ENCODE measurements at regions of chr17 and their contacts with region 1.

Region 1: GRCh38 chr17:70767102-70767701 is 597.9 kb downstream of the KCNJ2 start:
- DNase-seq: peak; percentile 29 to 43
- ATAC-seq: peak in 1 of 2 experiments; percentile 39; a peak in 1 of 6 replicates
- H3K4me3 ChIP-seq: no peak overlapping the region
- H3K27ac ChIP-seq: no peak overlapping the region
- H3K4me1 ChIP-seq: no peaks in the 10 kb centered on the region
- CTCF ChIP-seq: peak; percentile 89
- EP300 ChIP-seq: no peak
- POLR2A ChIP-seq: no peak
- RAD21 ChIP-seq: peak; percentile 86 to 93

Region 2: DNA sequence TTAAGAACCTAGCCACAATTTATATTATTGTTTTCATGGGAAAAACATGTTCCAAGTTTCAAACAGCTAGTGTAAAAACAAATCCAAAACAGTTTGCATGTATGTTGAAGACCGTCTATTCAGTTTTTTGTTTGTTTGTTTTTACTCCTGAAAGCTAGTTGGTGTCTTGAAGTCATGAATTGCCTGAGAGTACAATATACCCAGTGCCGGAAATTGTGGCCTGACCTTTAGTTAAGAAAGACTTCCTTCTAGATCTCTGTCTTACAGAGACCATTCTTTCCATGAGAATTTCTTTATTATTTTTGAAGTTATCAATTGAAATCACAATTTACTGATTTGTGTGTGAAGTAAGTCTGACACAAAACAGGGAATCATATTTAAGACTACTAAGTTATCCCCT is 123.1 kb before region 1 on chr17:
- CTCF ChIA-PET with region 1: no interaction called
- POLR2A ChIA-PET with region 1: no interaction called
- DNase-seq: no peak
- ATAC-seq: no peak
- H3K4me3 ChIP-seq: no peak overlapping the region
- H3K27ac ChIP-seq: no peak overlapping the region
- H3K4me1 ChIP-seq: no peaks in the 10 kb centered on the region
- CTCF ChIP-seq: no peak
- EP300 ChIP-seq: no peak
- POLR2A ChIP-seq: no peak
- RAD21 ChIP-seq: no peak

Region 3: DNA sequence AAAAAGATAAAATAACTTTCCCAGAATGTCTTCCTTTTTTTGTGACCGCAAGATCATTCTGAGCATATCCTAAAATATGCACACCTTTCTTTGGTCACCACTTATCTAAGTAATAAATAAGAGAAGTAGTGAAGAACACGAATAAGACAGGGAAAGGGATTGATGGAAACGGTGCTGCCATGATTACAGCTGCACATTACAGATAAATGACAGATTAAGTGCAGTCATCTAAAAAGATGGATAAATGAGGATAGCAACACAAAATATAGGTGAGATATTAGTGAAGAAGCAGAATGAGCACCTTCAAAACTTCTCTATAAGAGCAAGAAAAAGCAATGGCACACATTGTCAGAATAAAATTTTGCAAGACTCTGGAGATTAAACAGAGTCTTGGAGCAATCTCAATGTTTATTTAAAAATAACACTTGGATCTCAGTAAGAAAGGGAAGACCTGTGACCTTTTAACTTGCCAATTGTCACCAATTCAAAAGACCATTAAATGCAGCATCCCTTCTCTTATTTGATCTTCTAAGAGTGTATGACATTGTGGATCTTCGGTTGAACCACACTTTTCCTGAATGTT is 30.7 kb before region 1 on chr17:
- CTCF ChIA-PET with region 1: no interaction called
- POLR2A ChIA-PET with region 1: no interaction called
- DNase-seq: no peak
- ATAC-seq: no peak
- H3K4me3 ChIP-seq: no peak overlapping the region
- H3K27ac ChIP-seq: no peak overlapping the region
- H3K4me1 ChIP-seq: no peaks in the 10 kb centered on the region
- CTCF ChIP-seq: no peak
- EP300 ChIP-seq: no peak
- POLR2A ChIP-seq: no peak
- RAD21 ChIP-seq: no peak

Region 4: DNA sequence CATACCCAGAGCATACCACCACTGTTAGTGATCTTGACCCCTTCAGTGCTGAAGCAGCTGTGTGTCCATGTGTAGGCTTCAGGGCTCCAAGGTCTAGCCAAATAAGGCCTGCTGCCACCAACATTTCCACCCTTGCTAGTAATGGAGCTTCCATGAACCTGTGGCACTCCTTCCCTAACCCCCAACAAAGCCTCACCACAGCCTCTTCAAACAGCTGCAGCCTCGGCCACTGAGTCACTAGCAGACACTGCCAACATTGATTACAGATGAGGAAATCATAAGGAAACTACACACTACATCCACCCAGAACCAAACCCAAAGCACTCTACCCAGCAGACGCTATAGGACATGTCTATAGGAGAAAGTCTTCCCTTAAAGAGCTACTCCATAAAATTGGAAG is 12.8 kb after region 1 on chr17:
- CTCF ChIA-PET with region 1: interaction called, 43 read pairs
- POLR2A ChIA-PET with region 1: no interaction called
- DNase-seq: no peak
- ATAC-seq: no peak
- H3K4me3 ChIP-seq: no peak overlapping the region
- H3K27ac ChIP-seq: no peak overlapping the region
- H3K4me1 ChIP-seq: no peaks in the 10 kb centered on the region
- CTCF ChIP-seq: no peak
- EP300 ChIP-seq: no peak
- POLR2A ChIP-seq: no peak
- RAD21 ChIP-seq: no peak

Region 5: GRCh38 chr17:71460943-71461342 is 693.7 kb after region 1 on chr17:
- CTCF ChIA-PET with region 1: interaction called, 10 read pairs
- POLR2A ChIA-PET with region 1: no interaction called
- DNase-seq: peak in 1 of 2 experiments; percentile 12
- ATAC-seq: no peak
- H3K4me3 ChIP-seq: no peak overlapping the region
- H3K27ac ChIP-seq: no peak overlapping the region
- H3K4me1 ChIP-seq: no peaks in the 10 kb centered on the region
- CTCF ChIP-seq: peak; percentile 43
- EP300 ChIP-seq: no peak
- POLR2A ChIP-seq: no peak
- RAD21 ChIP-seq: peak; percentile 43 to 55; a peak in 4 of 5 replicates

Region 6: GRCh38 chr17:71636644-71637043 is 869.4 kb after region 1 on chr17:
- CTCF ChIA-PET with region 1: no interaction called
- POLR2A ChIA-PET with region 1: no interaction called
- DNase-seq: no peak
- ATAC-seq: no peak
- H3K4me3 ChIP-seq: no peak overlapping the region
- H3K27ac ChIP-seq: no peak overlapping the region
- H3K4me1 ChIP-seq: peaks cover 18% of the 10 kb centered on the region
- CTCF ChIP-seq: no peak
- EP300 ChIP-seq: no peak
- POLR2A ChIP-seq: no peak
- RAD21 ChIP-seq: no peak

Region 7: DNA sequence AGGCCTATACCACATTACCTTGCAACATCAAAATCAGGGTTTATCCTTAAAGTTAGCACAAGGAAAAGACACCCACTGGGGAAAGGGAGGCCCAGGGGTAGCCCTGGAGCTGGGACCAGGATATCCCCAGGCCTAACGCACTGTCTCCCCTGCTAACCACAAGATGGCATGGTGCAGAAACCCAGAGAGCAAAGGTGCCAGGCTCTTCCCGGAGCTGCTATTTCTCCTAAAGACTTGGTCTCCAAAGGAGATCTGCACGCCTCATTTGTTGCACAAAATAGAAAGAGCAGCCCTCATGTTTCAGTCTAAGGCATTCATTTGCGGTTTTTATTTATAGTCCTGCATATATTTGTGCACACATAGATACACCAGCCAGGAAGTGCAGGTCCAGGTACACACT is 1762.2 kb after region 1 on chr17:
- CTCF ChIA-PET with region 1: interaction called, 14 read pairs
- POLR2A ChIA-PET with region 1: no interaction called
- DNase-seq: no peak
- ATAC-seq: peak; percentile 41 to 56; a peak in 4 of 6 replicates
- H3K4me3 ChIP-seq: no peak overlapping the region
- H3K27ac ChIP-seq: peak overlapping the region in 1 of 2 experiments; percentile 19; a peak in 1 of 6 replicates
- H3K4me1 ChIP-seq: peaks cover 44% of the 10 kb centered on the region
- CTCF ChIP-seq: no peak; the same call in 2 of the 3 replicates
- EP300 ChIP-seq: no peak
- POLR2A ChIP-seq: no peak
- RAD21 ChIP-seq: 0 out of 5 replicates have a peak, but pooled peaks of 1 of the 2 experiments have one; percentile 5

Measured in A549 (cell line).